Right ventricle myocardium inferior (tissue), 1 donor: ENCODE measurements at regions of chr1 and their contacts with region 1.

Region 1: GRCh38 chr1:39919545-39919944 is 17.8 kb upstream of the MYCL start:
- DNase-seq: no peak
- ATAC-seq: peak; percentile 74

Region 2: DNA sequence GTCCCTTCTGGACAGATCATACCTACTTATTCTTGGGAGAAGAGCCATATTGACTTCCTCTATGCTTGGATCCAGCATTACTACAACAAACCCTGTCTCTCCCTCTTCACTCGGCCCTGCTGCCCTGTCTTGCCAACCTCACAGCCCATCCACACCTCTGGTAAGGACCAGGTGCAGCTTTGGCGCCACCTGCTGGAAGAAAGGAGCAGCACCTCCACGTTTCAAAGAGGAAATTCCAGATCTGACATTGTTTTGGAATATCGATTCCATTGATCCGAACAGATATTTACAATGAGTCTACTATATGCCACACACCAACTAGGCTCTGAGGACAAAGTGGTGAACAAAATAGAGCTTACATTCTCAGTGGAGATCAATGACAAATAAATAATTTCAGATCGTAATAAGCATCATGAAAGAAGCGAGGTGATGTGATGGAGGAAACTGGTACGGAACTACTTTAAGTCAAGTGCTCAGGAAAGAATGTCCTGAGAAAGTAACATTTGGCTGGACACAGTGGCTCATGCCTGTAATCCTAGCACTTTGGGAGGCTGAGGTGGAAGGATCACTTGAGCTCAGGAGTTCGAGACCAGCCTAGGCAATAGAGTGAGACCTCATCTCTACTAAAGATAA is 54.1 kb after region 1 on chr1:
- intact Hi-C with region 1: loop called (anchors 1 kb)
- DNase-seq: peak; percentile 83
- ATAC-seq: peak; percentile 70

Region 3: GRCh38 chr1:40032240-40032891 is 112.8 kb after region 1 on chr1:
- intact Hi-C with region 1: loop called (anchors 5 kb)
- DNase-seq: no peak
- ATAC-seq: no peak

Region 4: DNA sequence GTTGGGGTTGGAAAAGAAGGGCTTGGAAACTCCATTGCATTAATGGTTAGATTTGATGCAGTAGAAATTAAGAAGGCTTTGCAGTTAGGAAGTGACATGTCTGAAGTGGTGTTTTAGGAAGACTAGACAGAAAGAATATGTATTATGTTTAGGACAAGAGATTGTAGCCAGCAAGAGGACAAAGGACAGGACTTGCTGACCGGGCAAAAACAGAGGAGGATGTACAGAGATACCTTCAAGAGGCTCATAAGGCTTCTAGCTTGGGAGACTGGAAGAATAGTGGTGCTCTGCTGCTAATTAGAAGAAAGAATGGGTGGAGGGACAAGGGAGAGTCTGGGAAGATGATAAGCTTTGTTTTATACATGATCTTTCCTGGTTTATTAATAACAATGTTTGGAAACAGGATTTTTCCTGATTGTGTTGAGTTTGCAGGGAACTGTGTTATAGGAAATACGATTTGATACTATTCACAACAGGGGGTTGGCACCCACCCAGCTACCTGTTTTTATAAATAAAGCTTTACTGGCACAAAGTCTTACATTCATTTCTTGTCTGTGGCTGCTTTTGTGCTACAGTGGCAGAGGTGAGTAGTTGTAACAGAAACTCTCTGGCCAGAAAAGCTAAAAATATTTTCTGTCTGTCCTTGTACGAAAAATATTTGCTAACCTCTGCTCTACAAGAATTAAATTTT is 291.1 kb after region 1 on chr1:
- intact Hi-C with region 1: no loop called
- DNase-seq: no peak
- ATAC-seq: no peak